OCI-LY7 (cell line): ENCODE measurements at regions of chr6 and their contacts with region 1.

Region 1: DNA sequence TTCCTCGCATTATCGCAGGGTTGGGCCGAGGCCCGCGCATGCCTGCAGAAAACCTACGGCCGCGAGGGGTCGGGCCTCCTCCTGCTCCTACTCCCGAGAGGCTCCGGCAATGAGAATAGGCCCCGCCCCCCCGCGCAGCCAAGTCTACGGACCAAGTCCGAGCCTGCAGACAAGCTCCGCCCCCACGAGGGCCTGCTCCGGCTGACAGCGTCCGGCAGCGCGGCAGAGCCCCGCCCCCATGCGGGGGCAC is 3.1 kb upstream of the GPSM3 start:
- DNase-seq: peak; percentile 100
- H3K4me3 ChIP-seq: peak overlapping the region; percentile 79
- H3K27ac ChIP-seq: peak overlapping the region; percentile 79
- H3K4me1 ChIP-seq: peaks cover 51% of the 10 kb centered on the region
- CTCF ChIP-seq: no peak

Region 2: DNA sequence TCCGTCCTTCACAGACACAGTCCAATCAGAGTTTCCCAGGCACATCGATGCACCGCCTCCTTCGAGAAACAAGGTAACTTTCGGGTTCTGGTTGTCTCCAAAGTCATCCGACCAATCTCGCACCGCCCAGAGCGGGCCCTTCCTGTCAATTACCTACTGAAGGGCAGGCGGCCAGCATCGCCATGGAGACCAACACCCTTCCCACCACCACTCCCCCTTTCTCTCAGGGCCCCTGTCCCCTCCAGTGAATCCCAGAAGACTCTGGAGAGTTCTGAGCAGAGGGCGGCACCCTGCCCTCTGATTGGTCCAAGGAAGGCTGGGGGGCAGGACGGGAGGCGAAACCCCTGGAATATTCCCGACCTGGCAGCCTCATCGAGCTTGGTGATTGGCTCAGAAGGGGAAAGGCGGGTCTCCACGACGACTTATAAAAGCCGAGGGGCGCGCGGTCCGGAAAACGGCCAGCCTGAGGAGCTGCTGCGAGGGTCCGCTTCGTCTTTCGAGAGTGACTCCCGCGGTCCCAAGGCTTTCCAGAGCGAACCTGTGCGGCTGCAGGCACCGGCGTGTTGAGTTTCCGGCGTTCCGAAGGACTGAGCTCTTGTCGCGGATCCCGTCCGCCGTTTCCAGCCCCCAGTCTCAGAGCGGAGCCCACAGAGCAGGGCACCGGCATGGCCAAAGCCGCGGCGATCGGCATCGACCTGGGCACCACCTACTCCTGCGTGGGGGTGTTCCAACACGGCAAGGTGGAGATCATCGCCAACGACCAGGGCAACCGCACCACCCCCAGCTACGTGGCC is 368.1 kb before region 1 on chr6 and contains the start of gene HSPA1B:
- CTCF ChIA-PET with region 1: no interaction called
- POLR2A ChIA-PET with region 1: no interaction called
- intact Hi-C with region 1: no loop called
- DNase-seq: peak; percentile 94
- H3K4me3 ChIP-seq: peak within 1 kb of the TSS; percentile 76
- H3K27ac ChIP-seq: peak within 1 kb of the TSS; percentile 67
- H3K4me1 ChIP-seq: peaks cover 49% of the 10 kb centered on the region
- CTCF ChIP-seq: no peak
- total RNA-seq, gene HSPA1B: 160 and 177 TPM in 2 replicates

Region 3: GRCh38 chr6:32110632-32111031 is 84.9 kb before region 1 on chr6:
- CTCF ChIA-PET with region 1: interaction called, 15 read pairs
- POLR2A ChIA-PET with region 1: no interaction called
- intact Hi-C with region 1: no loop called
- DNase-seq: no peak
- H3K4me3 ChIP-seq: no peak overlapping the region
- H3K27ac ChIP-seq: no peak overlapping the region
- H3K4me1 ChIP-seq: no peaks in the 10 kb centered on the region
- CTCF ChIP-seq: no peak

Region 4: DNA sequence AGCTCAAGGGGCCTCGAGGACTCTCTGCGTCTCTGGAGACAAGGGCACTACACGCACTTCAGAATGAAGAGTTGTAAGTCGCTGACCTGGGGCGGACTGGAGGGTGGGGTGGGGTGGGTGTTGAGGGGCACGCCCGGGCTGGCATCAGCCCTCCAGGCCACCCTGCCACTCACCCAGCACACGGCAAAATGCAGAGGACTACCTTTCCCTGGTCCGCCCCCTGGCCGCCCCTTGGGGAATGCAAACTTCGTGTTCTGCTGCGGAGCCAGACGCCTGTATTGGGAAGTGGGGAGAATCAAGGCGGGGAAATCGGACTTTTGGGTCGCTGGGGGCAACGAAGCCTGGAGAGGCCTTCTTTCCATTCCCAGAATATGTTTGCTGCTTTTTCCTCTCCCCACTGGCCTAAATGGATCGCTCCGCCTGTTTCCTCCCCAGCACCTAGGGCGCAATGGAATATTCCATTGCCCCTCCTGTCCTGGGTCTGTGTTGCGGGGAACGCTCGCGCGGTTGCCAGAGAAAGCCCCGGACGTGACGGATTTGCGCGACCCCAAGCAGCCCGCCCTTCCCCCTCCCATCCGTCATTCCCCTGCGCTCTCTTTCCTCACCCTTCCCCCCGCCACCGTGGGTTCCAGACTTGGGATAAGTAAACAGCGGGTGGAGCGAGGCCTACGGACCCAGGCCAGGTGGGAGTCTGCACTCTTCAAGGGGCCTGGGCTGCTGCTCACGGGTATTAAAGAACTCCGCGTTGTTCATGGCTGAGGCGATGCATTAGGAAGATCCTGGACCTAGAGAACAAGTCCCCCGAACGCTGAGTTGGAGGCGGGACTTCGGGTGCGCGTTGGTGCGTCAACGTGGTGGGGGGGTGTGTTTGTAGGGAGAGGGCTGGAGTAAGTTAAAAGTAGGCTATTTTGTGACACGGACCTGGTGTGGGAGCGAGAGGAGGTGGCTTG is 41.7 kb before region 1 on chr6 and contains the start of gene PPT2:
- CTCF ChIA-PET with region 1: no interaction called
- POLR2A ChIA-PET with region 1: no interaction called
- intact Hi-C with region 1: loop called (anchors 1 kb)
- DNase-seq: peak; percentile 93
- H3K4me3 ChIP-seq: peak within 1 kb of the TSS; percentile 80
- H3K27ac ChIP-seq: peak within 1 kb of the TSS; percentile 62
- H3K4me1 ChIP-seq: peaks cover 23% of the 10 kb centered on the region
- CTCF ChIP-seq: 0 out of 2 replicates have a peak, but pooled peaks have one; percentile 19
- total RNA-seq, gene PPT2: 111 and 130 TPM in 2 replicates

Region 5: GRCh38 chr6:32212076-32212760 is 16.6 kb after region 1 on chr6:
- CTCF ChIA-PET with region 1: no interaction called
- POLR2A ChIA-PET with region 1: no interaction called
- intact Hi-C with region 1: no loop called
- DNase-seq: no peak
- H3K4me3 ChIP-seq: no peak overlapping the region
- H3K27ac ChIP-seq: no peak overlapping the region
- H3K4me1 ChIP-seq: peaks cover 2% of the 10 kb centered on the region
- CTCF ChIP-seq: no peak

Region 6: GRCh38 chr6:32224696-32225095 is 29.1 kb after region 1 on chr6:
- CTCF ChIA-PET with region 1: no interaction called
- POLR2A ChIA-PET with region 1: interaction called, 6 read pairs
- intact Hi-C with region 1: loop called (anchors 2 kb)
- DNase-seq: peak; percentile 81
- H3K4me3 ChIP-seq: peak overlapping the region; percentile 10
- H3K27ac ChIP-seq: peak overlapping the region; percentile 63
- H3K4me1 ChIP-seq: peaks cover 56% of the 10 kb centered on the region
- CTCF ChIP-seq: 0 out of 2 replicates have a peak, but pooled peaks have one; percentile 14